Kidney (tissue), 22 donors: ENCODE measurements at regions of chr3 and their contacts with region 1.

Region 1: GRCh38 chr3:141959921-141960554 is 83.6 kb downstream of the ATP1B3 start:
- DNase-seq: no peak
- H3K4me3 ChIP-seq: no peak overlapping the region
- H3K27ac ChIP-seq: no peak overlapping the region
- H3K4me1 ChIP-seq: peaks cover 0 to 3% (median 2%) of the 10 kb centered on the region in 3 donors
- H3K27me3 ChIP-seq: no peaks in the 10 kb centered on the region
- CTCF ChIP-seq: no peak

Region 2: DNA sequence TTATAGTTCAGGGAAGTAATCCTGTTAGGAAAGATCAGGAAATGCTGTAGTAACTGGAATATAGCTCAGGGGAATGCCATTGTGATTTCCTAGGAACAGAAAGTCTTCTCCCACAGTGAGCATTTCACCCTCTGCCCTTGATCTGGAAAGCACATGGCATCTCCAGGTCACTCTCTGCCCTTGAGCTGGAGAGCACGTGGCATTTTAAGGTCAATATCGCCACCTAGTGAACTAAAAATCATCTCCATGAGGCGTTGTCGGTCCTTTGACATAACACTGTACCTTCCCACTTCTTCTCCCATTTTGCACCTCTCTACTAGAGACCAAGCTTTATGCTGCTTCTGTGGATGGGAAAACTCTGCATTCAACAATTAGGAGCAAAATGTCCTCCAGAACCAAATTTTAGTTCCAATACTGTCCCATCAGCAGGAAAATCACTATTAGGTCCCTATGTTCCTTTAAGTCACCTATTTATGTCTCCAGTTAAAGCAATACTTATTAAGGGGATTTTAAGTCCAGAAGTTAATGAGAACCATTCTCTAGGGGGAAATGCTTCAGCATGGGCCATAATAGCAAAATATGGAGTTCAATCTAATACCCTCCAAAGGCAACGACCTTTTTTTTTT is 320.0 kb after region 1 on chr3:
- intact Hi-C with region 1: loop called (anchors 10 kb)
- DNase-seq: peak in 4 of 5 donors; percentile 55 to 85 (median 70)
- H3K4me3 ChIP-seq: no peak overlapping the region
- H3K27ac ChIP-seq: no peak overlapping the region
- H3K4me1 ChIP-seq: peaks cover 0 to 2% (median 0%) of the 10 kb centered on the region in 3 donors
- H3K27me3 ChIP-seq: no peaks in the 10 kb centered on the region
- CTCF ChIP-seq: peak; percentile 72